BJ (cell line): ENCODE measurements at regions of chr17 and their contacts with region 1.

Region 1: DNA sequence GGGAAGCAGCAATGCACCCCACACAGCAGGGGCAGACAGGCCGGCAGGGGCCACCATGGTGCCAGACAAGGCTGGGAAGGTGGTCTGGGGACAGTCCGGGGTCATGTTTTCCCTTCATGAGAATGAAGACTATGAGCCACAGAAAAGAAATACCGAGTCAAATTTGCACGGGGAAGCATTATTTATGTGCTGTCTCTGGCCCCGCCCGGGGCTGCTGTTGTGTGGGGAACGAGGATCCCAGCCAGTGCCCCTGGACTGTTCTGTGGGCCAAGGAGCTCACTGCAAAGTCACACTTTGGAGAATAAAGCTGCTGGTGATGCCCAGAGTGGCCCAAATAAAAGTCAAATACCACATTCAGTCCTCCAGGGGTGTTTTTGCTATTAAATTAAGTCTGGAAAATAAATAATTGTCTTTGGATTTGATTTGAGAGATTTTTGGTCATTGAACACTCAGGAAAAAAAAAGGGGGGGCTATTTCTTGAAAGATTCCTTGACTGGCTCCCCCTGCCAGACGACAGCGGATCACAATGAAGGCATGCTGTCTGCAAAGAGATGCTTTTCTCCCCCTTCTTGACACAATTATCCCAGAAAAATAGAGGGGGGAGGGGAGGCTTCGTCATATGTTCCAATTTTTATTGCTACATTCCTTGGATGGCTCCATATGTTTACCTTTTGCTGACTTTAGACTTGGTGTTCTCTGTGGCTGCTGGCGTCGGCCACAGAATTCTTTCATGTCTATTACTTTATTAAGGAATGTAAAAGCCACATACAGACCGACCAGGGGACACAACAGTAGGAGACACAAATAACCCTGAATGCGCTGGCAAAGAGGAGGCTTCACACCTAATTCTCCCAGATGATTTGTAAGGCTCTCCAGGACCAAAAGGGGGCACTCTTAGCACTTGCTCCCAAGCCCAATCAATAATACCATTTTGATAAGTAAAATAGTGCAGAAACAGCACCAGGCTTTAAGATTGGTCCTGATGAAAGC is 27.1 kb upstream of the ANKFN1 start:
- DNase-seq: peak; percentile 64
- H3K4me3 ChIP-seq: no peak overlapping the region
- H3K27me3 ChIP-seq: no peaks in the 10 kb centered on the region
- CTCF ChIP-seq: peak; percentile 74

Region 2: GRCh38 chr17:56064506-56064905 is 61.6 kb before region 1 on chr17:
- CTCF ChIA-PET with region 1: no interaction called
- POLR2A ChIA-PET with region 1: no interaction called
- DNase-seq: no peak
- H3K4me3 ChIP-seq: no peak overlapping the region
- H3K27me3 ChIP-seq: no peaks in the 10 kb centered on the region
- CTCF ChIP-seq: no peak

Region 3: GRCh38 chr17:56141046-56141839 is 15.1 kb after region 1 on chr17:
- CTCF ChIA-PET with region 1: interaction called, 11 read pairs
- POLR2A ChIA-PET with region 1: no interaction called
- DNase-seq: no peak
- H3K4me3 ChIP-seq: no peak overlapping the region
- H3K27me3 ChIP-seq: no peaks in the 10 kb centered on the region
- CTCF ChIP-seq: no peak

Region 4: DNA sequence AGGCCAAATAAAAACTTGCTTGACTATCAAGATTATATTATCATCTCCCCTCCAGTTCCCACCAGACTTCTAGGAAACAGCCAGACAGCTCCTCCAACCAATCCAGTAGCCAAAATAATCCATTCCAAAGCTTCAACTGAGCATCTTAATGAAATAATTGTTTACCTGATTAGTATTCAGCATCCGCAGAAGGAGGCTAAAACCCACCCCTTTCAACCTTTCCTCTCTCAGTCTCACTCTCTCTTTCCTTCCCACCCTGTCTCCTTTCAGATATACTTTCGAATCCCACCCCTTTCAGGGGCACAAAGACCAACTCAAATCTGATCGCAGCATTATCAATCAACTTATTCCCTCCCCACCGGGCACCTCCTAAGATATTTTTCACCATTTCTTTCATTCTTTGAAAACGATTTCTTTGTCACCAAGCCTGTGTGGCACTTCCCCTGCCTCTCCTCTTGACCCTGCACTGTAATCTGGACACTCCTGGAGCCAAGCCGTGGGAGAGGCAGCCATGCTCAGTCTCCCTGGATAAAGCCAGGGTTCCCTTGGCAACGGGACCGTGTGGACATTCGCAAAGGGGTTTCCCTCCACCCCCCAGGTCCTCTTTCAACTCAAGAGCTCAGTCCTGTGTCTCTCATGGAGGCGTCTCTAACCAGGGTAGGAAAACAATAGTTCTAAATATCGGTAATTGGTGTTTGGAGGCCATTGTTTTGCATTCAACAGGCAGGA is 26.9 kb after region 1 on chr17 and contains the start of gene ANKFN1:
- CTCF ChIA-PET with region 1: no interaction called
- POLR2A ChIA-PET with region 1: no interaction called
- DNase-seq: no peak
- H3K4me3 ChIP-seq: no peak within 1 kb of the TSS
- H3K27me3 ChIP-seq: no peaks in the 10 kb centered on the region
- CTCF ChIP-seq: no peak
- polyA plus RNA-seq, gene ANKFN1: 0.06 and 0.07 TPM in 2 replicates

Region 5: GRCh38 chr17:56319517-56319916 is 193.4 kb after region 1 on chr17:
- CTCF ChIA-PET with region 1: interaction called, 51 read pairs
- POLR2A ChIA-PET with region 1: no interaction called
- DNase-seq: peak; percentile 11
- H3K4me3 ChIP-seq: no peak overlapping the region
- H3K27me3 ChIP-seq: no peaks in the 10 kb centered on the region
- CTCF ChIP-seq: peak; percentile 58

Region 6: GRCh38 chr17:56325313-56326000 is 199.3 kb after region 1 on chr17:
- CTCF ChIA-PET with region 1: interaction called, 51 read pairs
- POLR2A ChIA-PET with region 1: no interaction called
- DNase-seq: no peak
- H3K4me3 ChIP-seq: no peak overlapping the region
- H3K27me3 ChIP-seq: no peaks in the 10 kb centered on the region; the same call in 1 of the 2 replicates
- CTCF ChIP-seq: no peak